Activated naive CD4-positive, alpha-beta T cell treated with anti-CD3 and anti-CD28 coated beads for 36 hours (primary cell): ENCODE measurements at regions of chr6 and their contacts with region 1.

Region 1: GRCh38 chr6:24974182-24975171 is 38.7 kb upstream of the RIPOR2 start:
- DNase-seq: peak; percentile 59
- H3K4me3 Mint-ChIP-seq: peak overlapping the region; percentile 16
- H3K27ac Mint-ChIP-seq: peak overlapping the region; percentile 92
- H3K4me1 Mint-ChIP-seq: peaks cover 58% of the 10 kb centered on the region
- H3K27me3 Mint-ChIP-seq: no peaks in the 10 kb centered on the region

Region 2: DNA sequence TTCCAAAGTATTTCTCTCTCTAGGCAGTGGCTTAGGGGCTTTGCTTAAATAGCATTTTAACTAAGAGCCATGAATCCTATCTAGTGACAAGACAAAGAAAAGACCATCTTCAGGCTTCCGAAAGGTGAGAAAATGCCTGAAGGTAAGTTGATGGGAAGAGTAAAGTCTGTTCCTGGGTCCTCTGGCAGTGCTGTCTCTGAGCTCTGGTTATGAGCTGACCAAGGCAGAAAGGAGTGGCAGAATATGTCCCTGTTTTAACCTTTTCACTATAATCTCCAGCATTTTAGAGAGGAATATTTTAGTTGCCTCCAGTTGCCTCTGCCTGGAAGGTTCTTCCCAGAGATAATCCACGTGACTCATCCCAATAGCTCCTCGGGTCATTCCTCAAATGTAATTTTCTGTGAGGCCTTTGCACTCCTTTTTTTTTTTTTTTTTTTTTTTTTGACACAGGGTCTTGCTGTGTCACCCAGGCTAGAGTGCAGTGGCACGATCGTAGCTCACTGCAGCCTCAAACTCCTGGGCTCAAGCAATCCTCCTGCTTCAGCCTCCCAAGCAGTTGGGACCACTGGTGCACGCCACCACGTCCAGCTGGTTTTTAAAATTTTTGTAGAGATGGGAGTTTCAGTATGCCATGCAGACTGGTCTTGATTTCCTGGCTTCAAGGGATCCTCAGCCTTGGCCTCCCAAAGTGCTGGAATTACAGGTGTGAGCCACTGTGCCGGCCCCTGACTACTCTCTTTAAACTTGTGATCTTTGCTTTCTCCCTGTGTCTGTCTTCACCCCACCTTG is 172.0 kb before region 1 on chr6:
- CTCF ChIA-PET with region 1: no interaction called
- intact Hi-C with region 1: no loop called
- DNase-seq: no peak
- H3K4me3 Mint-ChIP-seq: no peak overlapping the region
- H3K27ac Mint-ChIP-seq: no peak overlapping the region
- H3K4me1 Mint-ChIP-seq: peaks cover 16% of the 10 kb centered on the region
- H3K27me3 Mint-ChIP-seq: no peaks in the 10 kb centered on the region

Region 3: DNA sequence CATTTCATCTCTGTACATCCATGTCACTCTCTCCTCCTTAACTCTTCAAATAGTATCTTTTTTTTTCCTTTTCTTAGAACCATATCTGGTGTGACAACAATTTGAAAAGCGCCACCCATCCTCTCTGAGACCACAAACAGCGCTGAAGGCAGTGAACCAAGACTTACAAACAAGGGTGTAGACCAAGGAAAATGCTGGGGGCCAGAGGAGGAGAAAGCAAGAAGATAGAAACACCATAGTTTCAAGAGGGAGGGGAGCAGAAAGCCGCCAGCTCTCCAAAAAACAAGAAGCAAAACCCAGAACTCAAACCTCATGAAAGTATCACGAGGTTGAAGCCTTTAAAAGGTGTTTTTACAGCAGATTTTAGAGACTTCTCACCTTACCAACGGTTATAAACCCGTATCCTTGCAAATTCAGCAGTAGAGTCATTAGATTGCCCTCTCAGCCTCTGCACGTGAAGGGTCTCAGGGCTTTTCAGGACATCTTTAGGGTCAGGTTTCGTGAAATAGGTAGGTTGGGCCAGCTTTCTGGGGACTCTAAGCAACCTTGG is 25.4 kb before region 1 on chr6:
- CTCF ChIA-PET with region 1: no interaction called
- intact Hi-C with region 1: loop called (anchors 1 kb)
- DNase-seq: peak; percentile 51
- H3K4me3 Mint-ChIP-seq: peak overlapping the region; percentile 61
- H3K27ac Mint-ChIP-seq: peak overlapping the region; percentile 89
- H3K4me1 Mint-ChIP-seq: peaks cover 63% of the 10 kb centered on the region
- H3K27me3 Mint-ChIP-seq: no peaks in the 10 kb centered on the region

Region 4: GRCh38 chr6:25006565-25007001 is 32.1 kb after region 1 on chr6:
- CTCF ChIA-PET with region 1: interaction called, 3 read pairs
- intact Hi-C with region 1: loop called (anchors 1 kb)
- DNase-seq: peak; percentile 72
- H3K4me3 Mint-ChIP-seq: peak overlapping the region; percentile 31
- H3K27ac Mint-ChIP-seq: peak overlapping the region; percentile 68
- H3K4me1 Mint-ChIP-seq: peaks cover 80% of the 10 kb centered on the region
- H3K27me3 Mint-ChIP-seq: no peaks in the 10 kb centered on the region